Panc1 (cell line): ENCODE measurements at regions of chr7 and their contacts with region 1.

Region 1: DNA sequence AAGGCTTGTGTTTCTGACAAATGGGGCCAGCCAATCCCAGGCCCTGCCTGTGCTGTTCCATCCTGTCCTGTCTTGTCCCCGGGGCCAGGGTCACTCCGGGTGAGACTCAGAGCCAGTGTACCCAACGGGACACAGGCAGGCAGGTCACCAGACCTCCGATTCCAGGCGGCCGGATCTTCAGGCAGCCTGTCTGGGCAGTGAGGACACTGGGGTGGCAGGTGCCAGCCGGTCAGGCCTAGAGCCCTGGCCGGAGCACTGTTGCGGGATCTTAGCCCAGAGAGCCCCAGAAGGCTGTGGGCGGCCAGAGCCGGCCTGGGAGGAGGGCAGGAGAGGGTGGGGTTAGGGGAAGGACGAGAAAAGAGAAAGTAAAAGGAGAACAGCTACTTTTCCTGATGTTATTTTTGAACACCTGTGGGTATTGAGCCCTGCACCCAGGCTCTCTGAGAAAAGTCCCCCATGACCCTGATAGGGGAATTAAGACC is 134.3 kb upstream of the TNRC18 start:
- DNase-seq: no peak
- ATAC-seq: peak; percentile 33
- H3K4me3 ChIP-seq: peak overlapping the region in 1 of 2 experiments; percentile 31; a peak in 2 of 4 replicates
- H3K27ac ChIP-seq: peak overlapping the region; percentile 92
- H3K4me1 ChIP-seq: peaks cover 40% of the 10 kb centered on the region
- H3K27me3 ChIP-seq: no peaks in the 10 kb centered on the region
- CTCF ChIP-seq: no peak

Region 2: GRCh38 chr7:4895766-4896165 is 662.2 kb before region 1 on chr7:
- CTCF ChIA-PET with region 1: no interaction called
- POLR2A ChIA-PET with region 1: no interaction called
- in situ Hi-C with region 1: no loop called
- intact Hi-C with region 1: no loop called
- DNase-seq: no peak
- ATAC-seq: no peak
- H3K4me3 ChIP-seq: no peak overlapping the region
- H3K27ac ChIP-seq: no peak overlapping the region
- H3K4me1 ChIP-seq: no peaks in the 10 kb centered on the region
- H3K27me3 ChIP-seq: no peaks in the 10 kb centered on the region
- CTCF ChIP-seq: no peak

Region 3: GRCh38 chr7:5477723-5478531 is 80.0 kb before region 1 on chr7:
- CTCF ChIA-PET with region 1: interaction called, 21 read pairs
- POLR2A ChIA-PET with region 1: no interaction called
- in situ Hi-C with region 1: no loop called
- intact Hi-C with region 1: no loop called
- DNase-seq: no peak
- ATAC-seq: peak; percentile 51
- H3K4me3 ChIP-seq: no peak overlapping the region
- H3K27ac ChIP-seq: no peak overlapping the region
- H3K4me1 ChIP-seq: no peaks in the 10 kb centered on the region
- H3K27me3 ChIP-seq: no peaks in the 10 kb centered on the region
- CTCF ChIP-seq: no peak; the same call in 1 of the 2 replicates

Region 4: GRCh38 chr7:5514440-5515035 is 43.4 kb before region 1 on chr7:
- CTCF ChIA-PET with region 1: no interaction called
- POLR2A ChIA-PET with region 1: interaction called, 19 read pairs
- in situ Hi-C with region 1: no loop called
- intact Hi-C with region 1: no loop called
- DNase-seq: no peak
- ATAC-seq: peak; percentile 12
- H3K4me3 ChIP-seq: peak overlapping the region; percentile 96 to 100
- H3K27ac ChIP-seq: peak overlapping the region; percentile 97
- H3K4me1 ChIP-seq: peaks cover 20% of the 10 kb centered on the region
- H3K27me3 ChIP-seq: no peaks in the 10 kb centered on the region
- CTCF ChIP-seq: no peak